Left ventricle myocardium inferior (tissue), 1 donor: ENCODE measurements at regions of chr1 and their contacts with region 1.

Region 1: DNA sequence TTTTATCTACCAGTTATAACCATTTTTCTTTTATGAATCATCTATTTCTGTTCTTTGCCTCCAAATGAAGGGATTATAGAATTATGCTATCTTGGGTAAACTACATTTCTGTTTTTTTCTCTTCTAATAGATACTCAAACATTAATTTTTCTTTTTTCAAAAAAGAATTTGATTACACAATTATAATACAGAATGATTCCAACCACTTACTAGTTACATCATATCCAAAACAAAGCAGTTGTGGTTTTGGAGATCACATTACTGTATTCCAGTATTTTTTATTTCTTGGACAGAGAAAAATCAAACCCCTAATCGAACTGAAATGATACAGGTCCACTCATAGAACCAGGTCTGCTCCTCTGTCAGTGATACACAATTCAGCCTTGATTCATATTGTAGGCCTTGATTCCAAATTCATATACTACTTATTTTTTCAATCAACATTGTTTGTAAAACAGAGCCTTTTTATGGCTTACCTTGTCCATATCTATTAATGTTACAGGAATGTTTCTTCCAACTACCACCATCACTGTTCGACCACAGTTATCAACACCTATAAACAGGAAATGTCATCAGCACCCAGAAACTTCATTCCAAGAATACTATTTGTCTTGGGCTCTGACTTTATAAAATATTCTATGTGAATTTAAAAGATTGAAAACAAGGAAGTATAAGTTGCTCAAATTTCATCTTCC is 43.2 kb downstream of the GDAP2 start:
- DNase-seq: no peak
- H3K4me3 ChIP-seq: no peak overlapping the region
- H3K27ac ChIP-seq: no peak overlapping the region
- H3K4me1 ChIP-seq: no peaks in the 10 kb centered on the region
- H3K27me3 ChIP-seq: no peaks in the 10 kb centered on the region
- CTCF ChIP-seq: no peak

Region 2: GRCh38 chr1:117512743-117513321 is 373.4 kb before region 1 on chr1:
- intact Hi-C with region 1: loop called (anchors 10 kb)
- DNase-seq: no peak
- H3K4me3 ChIP-seq: no peak overlapping the region
- H3K27ac ChIP-seq: no peak overlapping the region
- H3K4me1 ChIP-seq: no peaks in the 10 kb centered on the region
- H3K27me3 ChIP-seq: no peaks in the 10 kb centered on the region
- CTCF ChIP-seq: peak; percentile 60

Region 3: DNA sequence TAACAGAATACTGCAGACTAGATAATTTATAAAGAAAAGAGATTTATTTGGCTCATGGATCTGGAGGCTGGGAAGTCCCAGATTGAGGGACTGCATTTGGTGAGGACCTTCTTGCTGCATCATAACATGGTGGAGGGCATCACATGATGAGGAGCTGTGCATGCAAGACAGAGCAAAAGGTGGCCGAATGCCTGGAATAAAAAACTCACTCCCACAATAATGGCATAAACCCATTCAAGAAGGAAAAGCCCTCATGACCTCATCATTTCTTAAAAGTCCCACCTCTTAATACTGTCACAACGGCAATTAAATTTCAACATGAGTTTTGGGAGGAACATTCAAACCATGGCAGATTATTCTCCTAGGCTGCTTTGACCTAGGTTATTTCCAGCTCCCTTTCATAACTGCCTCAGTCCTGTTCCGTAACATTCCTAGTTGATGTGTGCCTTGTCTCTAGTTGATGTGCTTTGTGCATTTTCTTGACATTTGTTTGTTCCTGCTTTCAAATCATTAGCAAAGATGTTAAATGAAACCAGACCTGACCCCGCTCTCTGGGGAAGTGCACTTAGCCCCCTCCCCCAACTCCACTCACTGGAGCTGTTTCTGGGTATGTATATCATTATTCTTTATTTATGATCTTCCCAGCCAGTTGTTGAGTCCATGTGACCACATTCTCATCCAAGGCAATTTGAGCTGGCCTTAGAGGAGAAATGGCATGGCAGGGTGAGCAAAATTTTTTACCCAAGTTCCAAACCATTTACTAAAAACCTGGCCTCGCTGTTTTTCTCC is 105.4 kb before region 1 on chr1:
- intact Hi-C with region 1: no loop called
- DNase-seq: no peak
- H3K4me3 ChIP-seq: no peak overlapping the region
- H3K27ac ChIP-seq: no peak overlapping the region
- H3K4me1 ChIP-seq: peaks cover 16% of the 10 kb centered on the region
- H3K27me3 ChIP-seq: no peaks in the 10 kb centered on the region
- CTCF ChIP-seq: no peak

Region 4: GRCh38 chr1:118185084-118185832 is 299.0 kb after region 1 on chr1 and contains the start of gene SPAG17:
- intact Hi-C with region 1: no loop called
- DNase-seq: peak; percentile 60
- H3K4me3 ChIP-seq: peak within 1 kb of the TSS; percentile 59
- H3K27ac ChIP-seq: no peak within 1 kb of the TSS
- H3K4me1 ChIP-seq: peaks cover 7% of the 10 kb centered on the region
- H3K27me3 ChIP-seq: peaks cover 13% of the 10 kb centered on the region
- CTCF ChIP-seq: peak; percentile 7
- total RNA-seq, gene SPAG17: not detected